A549 (cell line): ENCODE measurements at regions of chr11 and their contacts with region 1.

Region 1: GRCh38 chr11:118572061-118572980 is at the start of gene ARCN1:
- DNase-seq: peak; percentile 66 to 73
- ATAC-seq: peak; percentile 88 to 94
- H3K4me3 ChIP-seq: peak within 1 kb of the TSS; percentile 87
- H3K27ac ChIP-seq: peak within 1 kb of the TSS; percentile 90 to 98
- H3K4me1 ChIP-seq: peaks cover 21% of the 10 kb centered on the region
- CTCF ChIP-seq: no peak
- EP300 ChIP-seq: no peak
- POLR2A ChIP-seq: peak; percentile 49
- RAD21 ChIP-seq: no peak
- polyA plus RNA-seq, gene ARCN1: 140 and 150 TPM in 2 replicates

Region 2: GRCh38 chr11:118240999-118241768 is 331.1 kb before region 1 on chr11:
- CTCF ChIA-PET with region 1: no interaction called
- POLR2A ChIA-PET with region 1: no interaction called
- DNase-seq: no peak
- ATAC-seq: peak in 1 of 2 experiments; percentile 50; a peak in 1 of 6 replicates
- H3K4me3 ChIP-seq: no peak overlapping the region
- H3K27ac ChIP-seq: no peak overlapping the region
- H3K4me1 ChIP-seq: no peaks in the 10 kb centered on the region
- CTCF ChIP-seq: no peak
- EP300 ChIP-seq: no peak
- POLR2A ChIP-seq: no peak
- RAD21 ChIP-seq: no peak

Region 3: GRCh38 chr11:118359295-118359958 is 212.9 kb before region 1 on chr11 and contains the start of gene UBE4A:
- CTCF ChIA-PET with region 1: no interaction called
- POLR2A ChIA-PET with region 1: interaction called, 12 read pairs
- DNase-seq: peak; percentile 57 to 93
- ATAC-seq: peak; percentile 90 to 96
- H3K4me3 ChIP-seq: peak within 1 kb of the TSS; percentile 87
- H3K27ac ChIP-seq: peak within 1 kb of the TSS; percentile 70 to 86
- H3K4me1 ChIP-seq: peaks cover 5% of the 10 kb centered on the region; the same call in 1 of the 3 replicates
- CTCF ChIP-seq: no peak
- EP300 ChIP-seq: no peak
- POLR2A ChIP-seq: peak; percentile 66
- RAD21 ChIP-seq: no peak
- polyA plus RNA-seq, gene UBE4A: 18.9 and 28.7 TPM in 2 replicates

Region 4: DNA sequence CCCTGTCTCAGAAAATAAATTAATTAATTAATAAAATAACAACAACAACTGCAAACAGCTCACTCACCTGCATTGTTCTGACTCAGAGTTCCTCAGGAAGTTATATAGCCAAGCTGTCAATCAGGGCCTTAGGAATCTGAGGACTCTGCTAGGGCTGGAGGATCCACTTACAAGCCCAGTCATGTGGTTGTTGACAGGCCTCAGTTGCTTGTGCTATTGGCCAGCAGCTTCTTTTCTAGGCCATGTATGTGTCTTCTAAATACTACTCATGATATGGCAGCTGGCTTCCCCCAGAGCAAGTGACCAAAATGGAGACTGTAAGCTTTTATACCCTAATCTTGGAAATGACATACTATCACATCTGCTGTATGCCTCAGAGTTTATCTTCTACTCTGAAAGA is 191.8 kb before region 1 on chr11:
- CTCF ChIA-PET with region 1: no interaction called
- POLR2A ChIA-PET with region 1: no interaction called
- DNase-seq: no peak
- ATAC-seq: no peak
- H3K4me3 ChIP-seq: no peak overlapping the region
- H3K27ac ChIP-seq: no peak overlapping the region
- H3K4me1 ChIP-seq: no peaks in the 10 kb centered on the region
- CTCF ChIP-seq: no peak
- EP300 ChIP-seq: no peak
- POLR2A ChIP-seq: no peak
- RAD21 ChIP-seq: no peak

Region 5: GRCh38 chr11:118533662-118534363 is 38.5 kb before region 1 on chr11:
- CTCF ChIA-PET with region 1: no interaction called
- POLR2A ChIA-PET with region 1: no interaction called
- DNase-seq: no peak
- ATAC-seq: peak; percentile 18 to 31; a peak in 3 of 6 replicates
- H3K4me3 ChIP-seq: no peak overlapping the region
- H3K27ac ChIP-seq: no peak overlapping the region
- H3K4me1 ChIP-seq: no peaks in the 10 kb centered on the region
- CTCF ChIP-seq: no peak
- EP300 ChIP-seq: no peak
- POLR2A ChIP-seq: no peak
- RAD21 ChIP-seq: no peak

Region 6: GRCh38 chr11:118621071-118621783 is 48.9 kb after region 1 on chr11:
- CTCF ChIA-PET with region 1: no interaction called
- POLR2A ChIA-PET with region 1: no interaction called
- DNase-seq: no peak
- ATAC-seq: no peak
- H3K4me3 ChIP-seq: no peak overlapping the region
- H3K27ac ChIP-seq: peak overlapping the region; percentile 69 to 92; a peak in 5 of 6 replicates
- H3K4me1 ChIP-seq: peaks cover 78% of the 10 kb centered on the region
- CTCF ChIP-seq: no peak
- EP300 ChIP-seq: no peak
- POLR2A ChIP-seq: no peak
- RAD21 ChIP-seq: no peak